CD4-positive, alpha-beta memory T cell (primary cell): ENCODE measurements at regions of chr1 and their contacts with region 1.

Region 1: GRCh38 chr1:150293433-150294168 is at the start of gene MRPS21:
- DNase-seq: peak; percentile 86 to 90 (median 90)
- H3K4me3 ChIP-seq: peak within 1 kb of the TSS; percentile 52 to 67
- H3K4me3 Mint-ChIP-seq: peak within 1 kb of the TSS; percentile 89 to 96 (median 94)
- H3K27ac ChIP-seq: peak within 1 kb of the TSS; percentile 90
- H3K27ac Mint-ChIP-seq: peak within 1 kb of the TSS; percentile 92 to 100 (median 98)
- H3K4me1 ChIP-seq: peaks cover 20% of the 10 kb centered on the region
- H3K4me1 Mint-ChIP-seq: peaks cover 20 to 34% (median 29%) of the 10 kb centered on the region in 4 donors
- H3K27me3 ChIP-seq: no peaks in the 10 kb centered on the region
- H3K27me3 Mint-ChIP-seq: no peaks in the 10 kb centered on the region
- total RNA-seq, gene MRPS21: 62.9 to 68.7 TPM

Region 2: GRCh38 chr1:150268705-150269403 is 24.7 kb before region 1 on chr1 and contains the start of gene APH1A:
- CTCF ChIA-PET with region 1: no interaction called
- POLR2A ChIA-PET with region 1: interaction called, 4 read pairs
- intact Hi-C with region 1: loop called (anchors 1 kb)
- DNase-seq: peak; percentile 89 to 93 (median 91)
- H3K4me3 ChIP-seq: peak within 1 kb of the TSS; percentile 83 to 85
- H3K4me3 Mint-ChIP-seq: peak within 1 kb of the TSS; percentile 92 to 99 (median 97)
- H3K27ac ChIP-seq: peak within 1 kb of the TSS; percentile 96
- H3K27ac Mint-ChIP-seq: peak within 1 kb of the TSS; percentile 96 to 99 (median 99)
- H3K4me1 ChIP-seq: peaks cover 24% of the 10 kb centered on the region
- H3K4me1 Mint-ChIP-seq: peaks cover 18 to 35% (median 27%) of the 10 kb centered on the region in 4 donors
- H3K27me3 ChIP-seq: no peaks in the 10 kb centered on the region
- H3K27me3 Mint-ChIP-seq: no peaks in the 10 kb centered on the region
- total RNA-seq, gene APH1A: 118 to 120 TPM

Region 3: GRCh38 chr1:150281837-150282653 is 11.6 kb before region 1 on chr1 and contains the start of gene CIART:
- CTCF ChIA-PET with region 1: no interaction called
- POLR2A ChIA-PET with region 1: interaction called, 5 read pairs
- intact Hi-C with region 1: loop called (anchors 1 kb)
- DNase-seq: peak; percentile 81 to 89 (median 88)
- H3K4me3 ChIP-seq: peak within 1 kb of the TSS; percentile 61 to 80
- H3K4me3 Mint-ChIP-seq: peak within 1 kb of the TSS; percentile 83 to 97 (median 89)
- H3K27ac ChIP-seq: peak within 1 kb of the TSS; percentile 57
- H3K27ac Mint-ChIP-seq: peak within 1 kb of the TSS; percentile 87 to 98 (median 96)
- H3K4me1 ChIP-seq: peaks cover 23% of the 10 kb centered on the region
- H3K4me1 Mint-ChIP-seq: peaks cover 15 to 27% (median 24%) of the 10 kb centered on the region in 4 donors
- H3K27me3 ChIP-seq: no peaks in the 10 kb centered on the region
- H3K27me3 Mint-ChIP-seq: no peaks in the 10 kb centered on the region
- total RNA-seq, gene CIART: 0.67 to 0.94 TPM

Region 4: GRCh38 chr1:150321826-150322166 is 28.2 kb after region 1 on chr1:
- CTCF ChIA-PET with region 1: no interaction called
- POLR2A ChIA-PET with region 1: interaction called, 3 read pairs
- intact Hi-C with region 1: loop called (anchors 2 kb)
- DNase-seq: peak in 4 of 5 donors; percentile 19 to 53 (median 24)
- H3K4me3 ChIP-seq: peak overlapping the region; percentile 68 to 91
- H3K4me3 Mint-ChIP-seq: peak overlapping the region; percentile 95 to 100 (median 99)
- H3K27ac ChIP-seq: peak overlapping the region; percentile 81
- H3K27ac Mint-ChIP-seq: peak overlapping the region; percentile 95 to 100 (median 97)
- H3K4me1 ChIP-seq: peaks cover 23% of the 10 kb centered on the region
- H3K4me1 Mint-ChIP-seq: peaks cover 15 to 45% (median 30%) of the 10 kb centered on the region in 4 donors
- H3K27me3 ChIP-seq: no peaks in the 10 kb centered on the region
- H3K27me3 Mint-ChIP-seq: no peaks in the 10 kb centered on the region

Region 5: DNA sequence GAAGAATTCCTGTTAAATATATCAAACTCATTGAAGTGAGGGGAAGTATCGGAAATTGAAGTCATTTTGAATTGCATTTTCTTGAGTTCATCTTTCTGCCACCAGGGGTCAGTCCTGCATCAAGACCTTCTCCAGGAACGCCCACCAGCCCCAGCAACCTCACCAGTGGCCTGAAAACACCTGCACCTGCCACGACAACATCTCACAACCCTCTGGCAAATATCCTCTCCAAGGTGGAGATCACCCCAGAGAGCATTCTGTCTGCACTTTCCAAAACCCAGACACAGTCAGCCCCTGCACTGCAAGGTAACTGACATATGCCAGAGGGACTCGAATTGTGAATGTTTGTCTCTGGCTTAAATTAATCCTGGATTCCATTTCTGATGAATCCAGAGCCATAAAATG is 170.8 kb after region 1 on chr1:
- CTCF ChIA-PET with region 1: no interaction called
- POLR2A ChIA-PET with region 1: no interaction called
- intact Hi-C with region 1: no loop called
- DNase-seq: peak; percentile 66 to 77 (median 70)
- H3K4me3 ChIP-seq: no peak overlapping the region
- H3K4me3 Mint-ChIP-seq: no peak overlapping the region
- H3K27ac ChIP-seq: no peak overlapping the region
- H3K27ac Mint-ChIP-seq: peak overlapping the region in 3 of 7 donors; percentile 0 to 88 (median 38)
- H3K4me1 ChIP-seq: no peaks in the 10 kb centered on the region
- H3K4me1 Mint-ChIP-seq: peaks cover 0 to 6% (median 4%) of the 10 kb centered on the region in 4 donors
- H3K27me3 ChIP-seq: no peaks in the 10 kb centered on the region
- H3K27me3 Mint-ChIP-seq: no peaks in the 10 kb centered on the region